CD8-positive, alpha-beta T cell (primary cell): ENCODE measurements at regions of chr16 and their contacts with region 1.

Region 1: DNA sequence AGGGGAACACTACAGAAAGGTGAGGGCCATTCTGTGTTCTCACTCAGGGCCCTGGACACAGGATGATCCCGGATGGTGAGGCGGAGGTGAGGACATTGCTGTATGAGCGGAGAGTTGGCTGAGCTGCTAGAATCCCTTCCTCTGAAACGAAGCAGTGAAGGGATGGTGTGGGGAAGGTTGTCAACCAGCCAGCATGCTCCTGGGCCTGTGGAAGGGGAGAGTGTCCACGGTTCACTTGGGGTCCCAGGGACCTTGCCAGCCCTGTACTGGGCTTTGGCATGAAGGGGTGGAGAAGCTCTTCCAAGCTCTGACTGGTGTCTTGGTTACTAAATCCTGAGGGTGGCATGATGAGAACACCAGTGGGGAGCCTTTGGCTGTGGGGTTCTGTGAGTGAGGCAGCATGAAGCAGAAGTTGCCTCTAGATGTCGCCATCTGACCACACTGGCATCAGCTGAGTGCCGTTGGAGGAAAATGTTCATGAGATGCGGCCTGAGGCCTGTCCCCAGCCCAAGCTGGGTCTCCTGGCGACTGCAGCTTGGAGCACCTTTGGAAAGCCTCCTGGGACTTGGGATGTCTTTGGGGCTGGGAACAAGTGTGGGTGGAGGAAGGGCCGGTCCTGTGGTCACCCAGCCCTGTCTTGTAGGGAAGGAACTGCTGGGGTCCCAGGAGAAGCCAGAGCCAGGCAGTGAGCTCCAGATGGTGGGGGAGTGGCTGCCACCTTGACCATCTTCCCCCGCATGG is 14.8 kb downstream of the PDP2 start:
- DNase-seq: peak; percentile 16 to 74 (median 56)
- ATAC-seq: peak; percentile 94
- H3K4me3 ChIP-seq: no peak overlapping the region
- H3K4me3 Mint-ChIP-seq: no peak overlapping the region
- H3K27ac ChIP-seq: no peak overlapping the region
- H3K27ac Mint-ChIP-seq: no peak overlapping the region
- H3K4me1 ChIP-seq: peaks cover 3% of the 10 kb centered on the region
- H3K4me1 Mint-ChIP-seq: peaks cover 3% of the 10 kb centered on the region
- H3K27me3 ChIP-seq: no peaks in the 10 kb centered on the region
- H3K27me3 Mint-ChIP-seq: no peaks in the 10 kb centered on the region
- CTCF ChIP-seq: peak; percentile 49

Region 2: GRCh38 chr16:66905633-66906539 is 10.8 kb after region 1 on chr16:
- CTCF ChIA-PET with region 1: interaction called, 11 read pairs
- POLR2A ChIA-PET with region 1: no interaction called
- intact Hi-C with region 1: no loop called
- DNase-seq: peak in 4 of 9 experiments; percentile 18 to 40 (median 33)
- ATAC-seq: no peak
- H3K4me3 ChIP-seq: no peak overlapping the region
- H3K4me3 Mint-ChIP-seq: no peak overlapping the region
- H3K27ac ChIP-seq: no peak overlapping the region
- H3K27ac Mint-ChIP-seq: no peak overlapping the region
- H3K4me1 ChIP-seq: no peaks in the 10 kb centered on the region
- H3K4me1 Mint-ChIP-seq: peaks cover 7% of the 10 kb centered on the region
- H3K27me3 ChIP-seq: no peaks in the 10 kb centered on the region
- H3K27me3 Mint-ChIP-seq: no peaks in the 10 kb centered on the region
- CTCF ChIP-seq: no peak

Region 3: GRCh38 chr16:66924527-66925321 is 29.6 kb after region 1 on chr16:
- CTCF ChIA-PET with region 1: interaction called, 5 read pairs
- POLR2A ChIA-PET with region 1: no interaction called
- intact Hi-C with region 1: loop called in 1 of 2 experiments (anchors 2 kb)
- DNase-seq: peak in 5 of 9 experiments; percentile 22 to 67 (median 54)
- ATAC-seq: peak; percentile 78
- H3K4me3 ChIP-seq: no peak overlapping the region
- H3K4me3 Mint-ChIP-seq: peak overlapping the region; percentile 50
- H3K27ac ChIP-seq: no peak overlapping the region
- H3K27ac Mint-ChIP-seq: no peak overlapping the region
- H3K4me1 ChIP-seq: no peaks in the 10 kb centered on the region
- H3K4me1 Mint-ChIP-seq: peaks cover 10% of the 10 kb centered on the region
- H3K27me3 ChIP-seq: peaks cover 5 to 17% of the 10 kb centered on the region in 2 experiments
- H3K27me3 Mint-ChIP-seq: peaks cover 30% of the 10 kb centered on the region
- CTCF ChIP-seq: no peak